GM23248 (cell line): ENCODE measurements at regions of chr7 and their contacts with region 1.

Region 1: GRCh38 chr7:82044497-82045080 is 274.7 kb upstream of the HGF start:
- DNase-seq: peak; percentile 72
- H3K4me3 ChIP-seq: no peak overlapping the region
- H3K27ac ChIP-seq: no peak overlapping the region
- H3K4me1 ChIP-seq: peaks cover 17% of the 10 kb centered on the region
- H3K27me3 ChIP-seq: no peaks in the 10 kb centered on the region

Region 2: GRCh38 chr7:80127412-80128150 is 1917.0 kb before region 1 on chr7:
- in situ Hi-C with region 1: no loop called
- DNase-seq: no peak
- H3K4me3 ChIP-seq: no peak overlapping the region
- H3K27ac ChIP-seq: no peak overlapping the region
- H3K4me1 ChIP-seq: peaks cover 8% of the 10 kb centered on the region; the same call in 1 of the 2 replicates
- H3K27me3 ChIP-seq: no peaks in the 10 kb centered on the region; the same call in 1 of the 2 replicates

Region 3: DNA sequence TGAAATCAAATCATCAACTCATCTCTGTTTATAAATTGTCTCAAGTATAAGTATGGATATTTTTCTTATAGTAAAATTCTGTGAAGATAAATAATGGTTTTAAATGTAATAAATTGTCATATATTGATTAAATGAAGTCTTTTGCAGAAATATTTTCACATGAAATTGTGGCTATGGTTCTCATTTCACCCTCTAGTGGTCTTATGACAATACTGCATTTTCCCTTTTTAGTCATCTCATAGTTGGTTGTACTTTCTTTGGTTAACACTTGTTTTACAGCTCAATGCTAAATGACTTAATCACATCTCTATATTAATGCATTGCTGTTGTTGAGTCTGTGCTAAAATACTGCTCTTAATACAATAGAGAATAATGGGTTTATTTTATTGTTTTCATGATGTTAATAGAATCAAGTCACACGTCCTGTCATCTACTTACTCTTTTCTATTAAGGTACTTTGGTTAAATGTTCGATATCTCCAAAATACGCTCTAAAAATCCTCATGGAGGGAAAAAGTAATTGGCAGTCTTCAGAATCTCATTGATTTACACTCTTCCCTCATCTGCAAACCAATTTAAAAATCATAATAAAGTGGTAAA is 437.0 kb after region 1 on chr7:
- in situ Hi-C with region 1: loop called (anchors 25 kb)
- DNase-seq: peak; percentile 57
- H3K4me3 ChIP-seq: no peak overlapping the region
- H3K27ac ChIP-seq: no peak overlapping the region
- H3K4me1 ChIP-seq: no peaks in the 10 kb centered on the region
- H3K27me3 ChIP-seq: peaks cover 4% of the 10 kb centered on the region; the same call in 1 of the 2 replicates

Region 4: DNA sequence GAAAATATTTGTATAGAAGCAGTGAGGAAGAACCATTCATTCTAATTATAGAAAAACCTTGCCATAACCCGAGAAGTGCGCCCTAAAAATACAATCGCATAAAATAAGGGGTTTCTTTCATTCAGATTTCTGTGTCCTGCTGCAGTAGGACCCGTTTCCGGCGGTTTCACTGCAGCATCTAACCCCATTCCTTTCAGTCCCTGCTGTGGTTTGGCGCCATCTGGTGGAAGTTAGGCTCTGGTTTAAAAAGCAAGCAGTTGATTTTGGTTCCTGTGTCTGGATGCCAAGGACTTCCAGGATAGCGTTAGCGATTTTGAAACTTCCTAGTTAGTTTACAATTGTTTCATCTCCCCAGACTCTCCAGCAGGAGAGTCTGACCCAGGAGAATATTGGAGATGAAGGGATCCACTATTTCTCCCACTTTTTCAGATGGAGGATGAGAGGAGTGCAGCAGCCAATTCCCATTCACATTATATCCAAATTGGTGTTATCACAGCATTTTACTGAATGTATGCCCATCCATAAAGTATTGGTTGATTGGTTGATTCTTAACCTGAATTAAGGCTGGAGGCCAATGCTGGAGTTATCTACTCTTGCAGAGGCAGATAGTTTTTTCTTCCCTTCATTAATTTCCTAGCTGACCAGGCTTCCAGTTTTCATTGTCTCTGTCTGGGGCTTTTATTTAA is 527.7 kb after region 1 on chr7:
- in situ Hi-C with region 1: loop called (anchors 10 kb)
- DNase-seq: peak; percentile 87
- H3K4me3 ChIP-seq: peak overlapping the region; percentile 40; the same call in 1 of the 2 replicates
- H3K27ac ChIP-seq: no peak overlapping the region
- H3K4me1 ChIP-seq: no peaks in the 10 kb centered on the region
- H3K27me3 ChIP-seq: peaks cover 18% of the 10 kb centered on the region

Region 5: GRCh38 chr7:82740246-82740848 is 695.8 kb after region 1 on chr7:
- in situ Hi-C with region 1: loop called (anchors 25 kb)
- DNase-seq: peak; percentile 81
- H3K4me3 ChIP-seq: no peak overlapping the region
- H3K27ac ChIP-seq: no peak overlapping the region
- H3K4me1 ChIP-seq: peaks cover 6% of the 10 kb centered on the region; the same call in 1 of the 2 replicates
- H3K27me3 ChIP-seq: no peaks in the 10 kb centered on the region